Heart right ventricle (tissue), 16 donors: ENCODE measurements at regions of chr4 and their contacts with region 1.

Region 1: DNA sequence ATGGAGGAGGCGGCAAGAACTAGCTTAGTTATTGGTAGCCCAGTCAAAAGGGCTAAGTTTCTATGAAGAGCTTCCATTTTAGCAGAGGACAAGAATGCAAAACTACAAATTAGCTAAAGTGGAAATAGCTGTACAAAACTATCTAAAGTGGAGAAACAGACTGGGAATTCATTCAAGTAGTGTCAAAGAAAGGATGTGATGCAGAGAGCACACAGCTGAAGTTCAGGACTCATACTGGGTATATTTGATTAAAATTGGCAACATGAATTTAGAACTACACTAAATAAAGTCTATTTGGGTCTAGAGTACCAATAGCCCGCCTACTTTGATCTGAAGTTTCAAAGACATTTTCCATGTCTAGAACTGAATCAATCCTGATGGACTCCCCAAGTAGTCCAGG is 33.1 kb upstream of the GNRHR start:
- DNase-seq: no peak
- ATAC-seq: no peak
- H3K4me3 ChIP-seq: no peak overlapping the region
- H3K27ac ChIP-seq: no peak overlapping the region
- H3K4me1 ChIP-seq: peaks cover 0 to 6% (median 0%) of the 10 kb centered on the region in 9 donors
- H3K27me3 ChIP-seq: no peaks in the 10 kb centered on the region
- CTCF ChIP-seq: no peak

Region 2: GRCh38 chr4:67820903-67821302 is 33.6 kb after region 1 on chr4:
- intact Hi-C with region 1: loop called in 1 of 10 experiments (anchors 2 kb)
- DNase-seq: no peak
- ATAC-seq: no peak
- H3K4me3 ChIP-seq: no peak overlapping the region
- H3K27ac ChIP-seq: no peak overlapping the region
- H3K4me1 ChIP-seq: no peaks in the 10 kb centered on the region
- H3K27me3 ChIP-seq: no peaks in the 10 kb centered on the region
- CTCF ChIP-seq: no peak